ENCODE measurements at regions of chr15 and their contacts with region 1.

Region 1: DNA sequence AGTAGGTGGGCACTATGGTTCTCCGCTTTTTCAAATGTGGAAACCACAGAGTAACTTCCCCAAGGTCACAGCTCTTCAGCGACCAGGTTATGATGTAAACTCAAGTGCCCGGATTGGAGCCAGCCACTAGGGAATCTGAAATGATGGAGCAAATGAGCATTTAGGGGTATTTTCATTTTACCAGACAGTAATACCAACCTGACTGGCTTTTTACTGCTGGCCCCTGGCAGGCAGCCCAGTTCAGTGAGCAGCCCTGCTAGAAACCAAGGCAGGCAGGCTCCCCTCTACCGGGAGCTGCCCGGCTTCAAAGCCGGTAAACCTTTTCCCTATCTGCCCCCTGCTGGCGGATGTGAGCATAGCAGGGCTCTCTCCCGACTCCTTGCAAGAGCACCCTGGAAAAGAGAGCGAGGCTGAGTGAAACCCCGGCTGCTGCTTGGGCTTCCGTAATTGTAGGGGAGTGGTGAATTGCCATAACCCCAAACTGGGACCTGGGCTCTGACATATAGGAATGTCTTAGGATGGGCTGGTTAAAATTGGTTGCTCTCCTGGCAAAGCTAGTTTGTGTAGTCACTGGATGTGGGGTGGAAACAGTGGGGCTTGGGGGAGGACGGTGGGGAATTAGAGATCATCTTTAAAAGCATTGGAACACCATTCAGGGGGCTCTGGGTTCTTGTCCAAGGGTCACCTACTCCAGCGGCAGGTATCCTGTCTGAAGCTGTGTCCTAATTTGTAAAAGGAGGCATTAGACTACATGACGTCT is 98.0 kb upstream of the TNFAIP8L3 start:
- DNase-seq: peak; percentile 81 to 84
- ATAC-seq: peak; percentile 91 to 98
- H3K4me3 ChIP-seq: no peak overlapping the region
- H3K27ac ChIP-seq: no peak overlapping the region
- H3K4me1 ChIP-seq: no peaks in the 10 kb centered on the region
- CTCF ChIP-seq: peak; percentile 92
- EP300 ChIP-seq: no peak
- POLR2A ChIP-seq: no peak
- RAD21 ChIP-seq: peak; percentile 81 to 88

Region 2: GRCh38 chr15:51132384-51133139 is 60.1 kb before region 1 on chr15:
- CTCF ChIA-PET with region 1: interaction called, 11 read pairs
- POLR2A ChIA-PET with region 1: no interaction called
- DNase-seq: peak; percentile 55 to 69
- ATAC-seq: peak; percentile 74 to 89
- H3K4me3 ChIP-seq: no peak overlapping the region
- H3K27ac ChIP-seq: peak overlapping the region; percentile 54 to 57
- H3K4me1 ChIP-seq: peaks cover 13% of the 10 kb centered on the region
- CTCF ChIP-seq: peak; percentile 86
- EP300 ChIP-seq: no peak
- POLR2A ChIP-seq: no peak
- RAD21 ChIP-seq: peak; percentile 68 to 69

Region 3: DNA sequence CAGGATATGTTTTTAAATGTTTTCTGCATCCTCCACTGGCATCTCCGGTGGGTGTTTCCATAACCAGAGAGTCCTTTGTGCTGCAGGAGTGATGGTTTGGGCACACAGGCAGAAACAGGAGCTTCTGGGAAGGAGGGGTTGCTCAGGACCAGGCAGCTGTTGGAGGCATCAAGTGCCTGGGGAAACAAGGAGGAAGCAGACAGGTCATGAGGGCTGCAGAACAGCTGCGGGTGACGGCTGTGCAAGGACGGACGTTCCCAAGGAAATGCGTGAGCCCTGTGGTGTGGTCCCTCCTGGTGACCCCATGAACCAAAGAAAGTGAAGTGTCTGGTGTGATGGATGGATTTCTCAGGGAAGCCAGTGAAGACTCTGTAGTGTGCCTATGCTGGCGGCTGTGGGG is 36.8 kb before region 1 on chr15:
- CTCF ChIA-PET with region 1: interaction called, 333 read pairs
- POLR2A ChIA-PET with region 1: no interaction called
- DNase-seq: no peak
- ATAC-seq: no peak
- H3K4me3 ChIP-seq: no peak overlapping the region
- H3K27ac ChIP-seq: no peak overlapping the region
- H3K4me1 ChIP-seq: no peaks in the 10 kb centered on the region
- CTCF ChIP-seq: no peak
- EP300 ChIP-seq: no peak
- POLR2A ChIP-seq: no peak
- RAD21 ChIP-seq: no peak

Region 4: GRCh38 chr15:51218299-51218938 is 25.7 kb after region 1 on chr15:
- CTCF ChIA-PET with region 1: interaction called, 12 read pairs
- POLR2A ChIA-PET with region 1: no interaction called
- DNase-seq: no peak
- ATAC-seq: no peak
- H3K4me3 ChIP-seq: no peak overlapping the region
- H3K27ac ChIP-seq: no peak overlapping the region
- H3K4me1 ChIP-seq: no peaks in the 10 kb centered on the region
- CTCF ChIP-seq: no peak
- EP300 ChIP-seq: no peak
- POLR2A ChIP-seq: no peak
- RAD21 ChIP-seq: no peak

Region 5: DNA sequence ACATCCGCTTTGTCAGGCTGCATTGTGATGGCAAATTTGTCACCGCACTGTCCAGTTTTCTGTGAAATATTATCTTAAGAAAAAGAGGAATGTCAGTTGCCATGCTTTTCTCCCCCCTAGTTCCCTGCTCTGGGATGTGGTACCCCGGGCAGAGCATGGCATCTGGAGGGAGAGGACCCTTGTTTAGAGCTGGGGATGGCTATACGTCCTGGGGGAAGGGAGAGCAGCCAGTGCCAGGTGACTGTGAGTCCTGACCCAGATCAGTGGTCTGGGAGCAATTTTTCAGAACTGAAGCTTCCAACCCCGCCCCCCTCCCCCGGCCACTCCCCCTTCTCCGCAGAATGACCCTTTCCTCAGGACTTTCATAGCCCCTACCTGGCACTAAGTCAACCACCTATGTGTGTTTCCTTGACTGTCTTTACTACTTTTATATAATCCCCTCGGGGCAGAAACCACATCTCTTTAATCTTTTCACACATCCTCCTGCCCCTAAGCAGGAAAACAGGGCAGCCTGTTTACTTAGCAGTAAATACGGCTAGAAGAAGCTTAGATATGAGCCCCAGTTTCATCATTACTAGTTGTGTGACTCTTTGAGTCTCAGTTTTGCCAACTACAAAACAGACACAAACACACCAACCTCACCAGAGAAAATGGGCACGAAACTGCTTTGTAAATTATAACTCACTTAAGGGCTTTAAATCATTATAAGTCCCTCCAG is 47.2 kb after region 1 on chr15:
- CTCF ChIA-PET with region 1: interaction called, 16 read pairs
- POLR2A ChIA-PET with region 1: no interaction called
- DNase-seq: no peak
- ATAC-seq: no peak
- H3K4me3 ChIP-seq: no peak overlapping the region
- H3K27ac ChIP-seq: no peak overlapping the region
- H3K4me1 ChIP-seq: 0 out of 3 replicates have a peak, but pooled peaks cover 4% of the 10 kb centered on the region
- CTCF ChIP-seq: no peak
- EP300 ChIP-seq: no peak
- POLR2A ChIP-seq: no peak
- RAD21 ChIP-seq: no peak

Measured in A549 (cell line).